Posterior vena cava (tissue), 2 donors: ENCODE measurements at regions of chr7 and their contacts with region 1.

Region 1: GRCh38 chr7:128347647-128348097 is 4.0 kb upstream of the RBM28 start:
- DNase-seq: no peak

Region 2: GRCh38 chr7:128304212-128304611 is 43.5 kb before region 1 on chr7:
- intact Hi-C with region 1: no loop called
- DNase-seq: no peak

Region 3: DNA sequence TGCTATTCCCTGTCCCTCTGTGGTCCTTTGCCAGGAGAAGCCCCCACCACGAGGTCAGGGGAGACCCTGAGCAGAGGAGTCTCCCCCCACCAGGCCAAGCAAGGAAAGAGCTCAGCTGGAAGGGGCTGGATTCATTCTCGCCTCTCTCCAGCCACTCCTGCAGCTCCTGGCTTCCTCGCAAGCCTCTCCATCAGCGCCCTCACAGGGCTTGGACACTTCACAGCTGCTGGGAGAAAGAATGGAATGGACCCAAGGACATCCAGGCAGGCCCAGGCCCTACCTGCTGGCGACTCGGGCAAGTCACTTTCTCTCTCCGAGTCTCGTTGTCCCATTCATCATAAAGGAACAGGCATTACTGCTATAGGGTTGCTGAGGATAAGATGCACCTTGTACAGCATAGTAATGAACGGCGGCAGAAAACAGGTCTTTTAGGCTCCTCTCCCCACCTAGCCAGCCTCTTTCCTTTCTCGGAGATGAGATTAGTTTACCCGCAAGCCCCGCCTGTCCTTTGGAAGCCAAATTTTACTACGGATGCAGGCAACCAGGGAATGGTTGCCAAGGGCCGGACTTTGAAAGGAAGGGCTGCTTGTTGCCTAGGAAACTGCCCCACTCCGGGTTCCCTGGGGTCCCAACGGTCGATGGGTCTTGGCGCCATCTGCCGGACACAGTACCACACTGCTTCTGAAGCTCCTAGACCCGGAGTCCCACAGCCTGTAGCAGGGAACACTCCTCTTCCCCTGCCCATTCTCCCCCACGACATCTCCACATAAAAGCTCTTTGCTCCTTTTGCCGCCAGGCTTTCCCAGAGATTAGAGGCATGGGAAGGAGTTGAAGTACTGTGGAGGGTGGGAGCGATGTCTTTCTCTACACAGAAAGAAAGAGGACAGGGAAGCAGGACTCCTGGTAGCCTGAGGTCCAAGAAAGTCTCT is 39.8 kb after region 1 on chr7:
- intact Hi-C with region 1: loop called (anchors 2 kb)
- DNase-seq: peak; percentile 95

Region 4: GRCh38 chr7:129762438-129762837 is 1414.8 kb after region 1 on chr7:
- intact Hi-C with region 1: no loop called
- DNase-seq: no peak